PC-9 (cell line): ENCODE measurements at regions of chr3 and their contacts with region 1.

Region 1: DNA sequence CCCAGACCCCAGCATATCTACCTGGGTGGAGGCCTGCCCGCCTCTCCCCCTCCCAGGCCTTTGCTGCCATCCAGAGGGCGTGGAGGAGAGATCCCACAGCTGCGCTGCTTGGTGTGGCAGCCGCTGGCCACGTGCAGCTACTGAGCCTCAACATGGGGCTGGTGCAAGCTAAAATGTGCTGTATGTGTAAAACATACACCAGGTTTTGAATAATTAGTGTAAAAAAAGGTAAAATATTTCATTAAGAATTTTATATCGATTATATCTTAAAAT is 95.8 kb downstream of the SEC22A start:
- DNase-seq: no peak
- H3K4me3 ChIP-seq: no peak overlapping the region
- H3K27ac ChIP-seq: no peak overlapping the region
- H3K4me1 ChIP-seq: 0 out of 2 replicates have a peak, but pooled peaks cover 4% of the 10 kb centered on the region
- H3K27me3 ChIP-seq: no peaks in the 10 kb centered on the region
- CTCF ChIP-seq: no peak

Region 2: GRCh38 chr3:122826278-122826677 is 471.3 kb before region 1 on chr3:
- CTCF ChIA-PET with region 1: interaction called, 15 read pairs
- POLR2A ChIA-PET with region 1: no interaction called
- intact Hi-C with region 1: no loop called
- DNase-seq: no peak
- H3K4me3 ChIP-seq: no peak overlapping the region
- H3K27ac ChIP-seq: no peak overlapping the region
- H3K4me1 ChIP-seq: no peaks in the 10 kb centered on the region
- H3K27me3 ChIP-seq: no peaks in the 10 kb centered on the region
- CTCF ChIP-seq: no peak